MCF 10A (cell line): ENCODE measurements at regions of chr1 and their contacts with region 1.

Region 1: GRCh38 chr1:155648551-155649147 is 38.6 kb downstream of the MSTO1 start:
- DNase-seq: peak; percentile 97
- H3K4me3 Mint-ChIP-seq: peak overlapping the region; percentile 73
- H3K27ac Mint-ChIP-seq: peak overlapping the region; percentile 47
- H3K4me1 Mint-ChIP-seq: peaks cover 53% of the 10 kb centered on the region
- H3K27me3 Mint-ChIP-seq: no peaks in the 10 kb centered on the region
- CTCF ChIP-seq: peak; percentile 61

Region 2: DNA sequence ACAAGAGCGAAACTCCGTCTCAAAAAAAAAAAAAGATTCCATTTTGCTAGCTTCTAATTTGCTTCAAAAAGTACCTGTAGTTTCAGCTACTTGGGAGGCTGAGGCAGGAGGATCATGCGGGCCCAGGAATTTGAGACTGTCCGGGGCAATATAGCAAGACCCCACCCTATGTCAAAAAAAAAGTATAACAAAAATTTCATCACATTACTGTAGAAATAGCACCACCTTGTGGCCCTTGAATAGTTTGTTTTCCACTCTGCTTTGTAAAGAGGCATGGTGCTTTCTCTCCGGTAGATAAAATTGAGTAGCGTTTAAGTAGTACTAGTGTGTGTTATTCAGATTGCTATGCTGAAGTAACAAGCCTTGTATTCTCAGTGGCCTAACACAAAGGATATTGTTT is 56.9 kb before region 1 on chr1:
- CTCF ChIA-PET with region 1: interaction called, 17 read pairs
- POLR2A ChIA-PET with region 1: no interaction called
- intact Hi-C with region 1: loop called (anchors 10 kb)
- DNase-seq: peak; percentile 78
- H3K4me3 Mint-ChIP-seq: no peak overlapping the region
- H3K27ac Mint-ChIP-seq: no peak overlapping the region
- H3K4me1 Mint-ChIP-seq: no peaks in the 10 kb centered on the region
- H3K27me3 Mint-ChIP-seq: no peaks in the 10 kb centered on the region
- CTCF ChIP-seq: peak; percentile 80